Calu3 (cell line): ENCODE measurements at regions of chr13 and their contacts with region 1.

Region 1: GRCh38 chr13:40340368-40341095 is 325.9 kb downstream of the FOXO1 start:
- DNase-seq: no peak
- H3K4me3 Mint-ChIP-seq: no peak overlapping the region
- H3K27ac Mint-ChIP-seq: no peak overlapping the region
- H3K4me1 Mint-ChIP-seq: peaks cover 21% of the 10 kb centered on the region
- H3K27me3 Mint-ChIP-seq: no peaks in the 10 kb centered on the region
- CTCF ChIP-seq: no peak

Region 2: DNA sequence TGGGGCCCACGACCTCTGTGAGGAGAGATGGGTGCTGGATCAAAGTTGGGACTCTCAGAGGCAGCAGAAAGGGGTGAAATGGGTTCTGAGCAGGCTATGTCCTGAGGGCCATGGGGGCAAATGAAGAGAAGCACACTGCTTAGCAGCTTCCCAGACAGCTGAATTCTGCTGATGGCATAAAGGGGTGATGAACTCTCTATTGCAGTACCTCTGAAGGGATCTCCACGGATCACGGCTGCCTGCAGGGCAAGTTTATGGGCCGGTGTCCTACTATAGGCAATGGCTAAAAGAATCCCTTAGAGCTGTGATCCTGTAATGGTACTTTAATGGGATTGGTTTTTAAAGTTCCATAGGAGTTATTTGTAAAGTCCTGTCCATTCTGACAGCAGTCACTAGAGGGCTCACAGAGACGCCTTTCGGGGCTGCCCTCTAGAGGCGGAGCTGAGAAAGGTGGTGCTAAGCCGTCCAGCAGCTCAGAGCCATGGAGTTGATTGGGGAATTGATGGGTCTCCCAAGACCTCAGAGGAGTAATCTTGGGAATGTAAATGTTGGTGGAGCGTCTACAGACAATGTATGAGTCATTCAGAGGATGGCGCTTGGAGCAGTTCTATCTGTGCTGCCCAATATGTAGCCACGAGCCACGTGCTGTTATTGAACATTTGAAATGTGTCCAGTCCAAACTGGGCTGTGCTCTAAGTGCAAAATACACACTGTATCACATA is 397.8 kb before region 1 on chr13:
- CTCF ChIA-PET with region 1: no interaction called
- intact Hi-C with region 1: loop called (anchors 10 kb)
- DNase-seq: peak; percentile 70
- H3K4me3 Mint-ChIP-seq: no peak overlapping the region
- H3K27ac Mint-ChIP-seq: no peak overlapping the region
- H3K4me1 Mint-ChIP-seq: peaks cover 7% of the 10 kb centered on the region
- H3K27me3 Mint-ChIP-seq: no peaks in the 10 kb centered on the region
- CTCF ChIP-seq: peak; percentile 86

Region 3: GRCh38 chr13:40401911-40402776 is 61.6 kb after region 1 on chr13:
- CTCF ChIA-PET with region 1: no interaction called
- intact Hi-C with region 1: no loop called
- DNase-seq: peak; percentile 81
- H3K4me3 Mint-ChIP-seq: peak overlapping the region; percentile 14
- H3K27ac Mint-ChIP-seq: peak overlapping the region; percentile 86
- H3K4me1 Mint-ChIP-seq: peaks cover 19% of the 10 kb centered on the region
- H3K27me3 Mint-ChIP-seq: no peaks in the 10 kb centered on the region
- CTCF ChIP-seq: no peak

Region 4: DNA sequence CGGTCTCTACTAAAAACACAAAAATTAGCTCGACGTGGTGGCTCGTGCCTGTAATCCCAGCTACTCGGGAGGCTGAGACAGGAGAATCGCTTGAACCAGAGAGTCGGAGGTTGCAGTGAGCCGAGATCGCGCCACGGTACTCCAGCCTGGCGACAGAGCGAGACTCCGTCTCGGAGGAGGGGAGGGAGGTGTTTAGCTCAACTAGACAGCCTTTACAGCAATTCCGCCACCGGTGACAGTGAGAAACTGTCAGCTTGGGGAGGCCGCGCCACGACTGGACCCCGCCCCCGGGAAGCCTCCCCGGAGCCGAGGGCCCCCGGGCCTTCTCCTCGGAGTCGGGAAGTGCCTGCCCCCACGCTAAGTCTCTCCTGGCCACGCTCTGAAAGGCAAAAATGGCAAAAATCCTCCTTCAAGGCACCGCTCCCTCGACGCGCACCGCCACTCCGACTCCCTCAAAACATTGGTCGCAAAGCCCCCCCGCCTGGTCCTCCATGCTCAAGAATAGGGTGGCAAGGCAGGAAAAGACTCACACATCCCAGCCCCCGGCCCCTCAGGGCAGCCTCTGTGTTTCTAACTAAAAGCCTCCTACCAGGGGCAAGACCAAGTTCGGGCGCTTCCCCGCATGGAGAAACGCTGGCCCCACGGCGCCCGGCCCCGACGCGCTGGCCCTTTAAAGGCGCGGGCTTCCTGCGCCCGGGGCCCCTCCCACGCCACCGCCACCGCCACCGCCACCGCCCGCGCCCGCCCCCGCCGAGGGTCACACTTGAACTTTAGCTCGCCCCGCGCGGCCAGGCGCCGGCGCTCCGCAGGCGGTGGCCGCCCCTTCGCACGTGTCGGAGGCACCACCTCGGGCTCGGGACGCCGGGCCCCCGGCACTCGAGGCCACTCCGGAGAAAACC is 323.8 kb after region 1 on chr13:
- CTCF ChIA-PET with region 1: interaction called, 11 read pairs
- intact Hi-C with region 1: no loop called
- DNase-seq: peak; percentile 70
- H3K4me3 Mint-ChIP-seq: peak overlapping the region; percentile 95
- H3K27ac Mint-ChIP-seq: peak overlapping the region; percentile 68
- H3K4me1 Mint-ChIP-seq: no peaks in the 10 kb centered on the region
- H3K27me3 Mint-ChIP-seq: no peaks in the 10 kb centered on the region
- CTCF ChIP-seq: no peak